Right ventricle myocardium superior (tissue), 1 donor: ENCODE measurements at regions of chr15 and their contacts with region 1.

Region 1: DNA sequence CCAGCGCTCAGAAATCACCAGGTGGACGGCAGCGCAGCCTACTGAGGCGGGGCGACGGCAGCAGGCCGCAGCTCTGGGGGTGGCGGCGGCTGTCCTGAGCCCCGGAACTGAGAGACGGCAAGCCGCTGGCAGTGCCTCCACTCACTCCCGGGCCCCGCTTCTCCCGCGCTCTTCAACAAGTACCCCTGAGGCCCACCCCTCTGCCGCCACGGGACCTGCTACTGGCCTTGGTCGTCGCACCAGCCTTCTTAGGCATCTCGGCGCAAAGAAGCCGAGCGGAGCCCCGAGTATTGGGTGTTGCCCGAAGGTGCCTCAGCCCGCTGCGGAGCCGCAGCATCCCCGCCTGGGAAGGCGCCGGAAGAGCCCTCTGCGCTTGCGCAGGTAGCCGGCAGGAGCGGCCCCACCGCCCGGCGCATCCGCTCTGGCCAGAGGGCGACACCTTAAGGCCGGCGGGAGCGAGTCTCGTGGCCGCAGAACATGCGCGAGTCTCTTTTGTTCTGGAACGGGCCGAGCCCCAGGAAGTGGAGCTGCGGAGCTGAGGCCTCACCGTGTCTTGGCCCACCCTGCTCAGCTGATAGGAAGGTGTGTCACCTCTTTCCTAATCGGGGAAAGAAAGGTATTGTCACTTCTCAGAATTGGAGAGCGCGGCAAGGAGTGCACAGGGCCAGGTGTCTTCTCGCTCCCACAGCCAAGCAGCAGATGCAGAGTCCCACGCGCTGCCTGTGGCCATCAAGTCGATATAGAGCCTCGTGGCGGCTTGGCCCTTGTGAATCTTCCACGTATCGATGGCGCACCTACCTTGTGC is at the start of gene C15orf40:
- DNase-seq: peak; percentile 95
- ATAC-seq: peak; percentile 100
- total RNA-seq, gene C15orf40: 11.2 TPM

Region 2: DNA sequence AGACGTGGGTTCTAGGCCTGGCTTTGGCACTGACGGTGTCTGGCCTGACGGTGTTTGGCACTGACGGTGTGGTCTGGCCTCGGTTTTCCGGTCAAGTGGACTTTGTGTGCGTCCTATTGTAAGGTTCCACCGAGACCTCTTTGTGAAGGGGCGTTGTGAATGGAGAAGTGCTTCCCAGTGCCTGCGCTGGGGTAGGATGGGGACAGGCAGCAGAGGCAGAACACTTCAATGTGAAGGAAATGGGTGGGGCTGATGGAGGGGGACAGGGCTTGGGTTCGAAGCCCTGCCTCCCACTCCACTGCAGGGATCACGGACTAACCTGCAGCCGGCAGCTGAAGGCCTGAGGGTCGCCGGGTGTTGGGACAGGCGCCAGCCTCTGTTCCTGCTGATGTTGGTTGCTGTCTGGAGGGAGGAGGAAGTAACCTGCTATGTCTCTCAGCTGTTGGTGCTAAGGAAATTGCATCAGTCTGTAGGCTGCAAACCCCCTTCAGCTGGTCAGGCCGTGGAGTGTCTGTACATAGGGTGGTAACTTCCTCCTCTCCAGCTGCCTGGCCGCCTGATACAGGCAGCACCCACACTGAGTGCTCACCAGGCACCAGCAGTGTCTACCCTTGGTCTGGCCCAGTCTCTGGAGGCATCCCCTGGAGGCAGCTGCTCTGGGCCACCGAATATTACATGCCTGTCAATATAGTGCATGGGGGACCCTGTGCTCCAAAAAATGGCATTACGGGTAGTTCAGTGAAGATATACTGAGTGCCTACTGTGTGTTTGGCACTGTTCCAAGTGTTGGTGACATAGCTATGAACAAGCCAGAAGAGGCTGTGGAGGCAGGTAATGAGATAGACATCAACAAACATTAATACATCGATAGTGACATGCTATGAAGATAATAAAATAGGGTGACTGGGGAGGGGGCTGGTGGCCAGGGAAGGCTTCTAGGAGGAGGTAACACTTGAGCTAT is 97.1 kb after region 1 on chr15:
- intact Hi-C with region 1: loop called (anchors 10 kb)
- DNase-seq: peak; percentile 78
- ATAC-seq: peak; percentile 82

Region 3: GRCh38 chr15:83144189-83144588 is 132.7 kb after region 1 on chr15:
- intact Hi-C with region 1: no loop called
- DNase-seq: no peak
- ATAC-seq: no peak

Region 4: DNA sequence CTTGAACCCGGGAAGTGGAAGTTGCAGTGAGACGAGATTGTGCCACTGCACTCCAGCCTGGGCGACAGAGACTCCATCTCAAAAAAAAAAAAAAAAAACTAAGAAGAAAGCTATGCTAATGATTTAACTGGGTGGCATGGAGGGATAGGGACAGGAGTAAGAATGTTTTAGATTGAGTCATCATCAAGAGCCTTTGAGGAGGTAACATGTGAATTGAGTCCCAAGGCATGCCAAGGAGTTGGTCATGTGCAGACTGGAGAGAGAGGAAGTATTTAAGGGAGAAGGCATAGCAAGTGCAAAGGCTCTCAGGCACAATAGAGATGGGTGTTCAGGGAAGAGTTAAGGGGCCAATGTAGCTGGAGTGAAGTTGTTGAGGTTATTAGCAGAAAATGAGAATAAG is 263.9 kb after region 1 on chr15:
- intact Hi-C with region 1: no loop called
- DNase-seq: no peak
- ATAC-seq: no peak